Posterior cingulate gyrus (tissue), 11 donors: ENCODE measurements at regions of chr12 and their contacts with region 1.

Region 1: GRCh38 chr12:78359520-78359919 is 505.1 kb upstream of the SYT1 start:
- DNase-seq: no peak

Region 2: GRCh38 chr12:78290606-78291345 is 68.7 kb before region 1 on chr12:
- intact Hi-C with region 1: loop called (anchors 10 kb)
- DNase-seq: no peak